GM12878 (cell line): ENCODE measurements at regions of chr2 and their contacts with region 1.

Region 1: DNA sequence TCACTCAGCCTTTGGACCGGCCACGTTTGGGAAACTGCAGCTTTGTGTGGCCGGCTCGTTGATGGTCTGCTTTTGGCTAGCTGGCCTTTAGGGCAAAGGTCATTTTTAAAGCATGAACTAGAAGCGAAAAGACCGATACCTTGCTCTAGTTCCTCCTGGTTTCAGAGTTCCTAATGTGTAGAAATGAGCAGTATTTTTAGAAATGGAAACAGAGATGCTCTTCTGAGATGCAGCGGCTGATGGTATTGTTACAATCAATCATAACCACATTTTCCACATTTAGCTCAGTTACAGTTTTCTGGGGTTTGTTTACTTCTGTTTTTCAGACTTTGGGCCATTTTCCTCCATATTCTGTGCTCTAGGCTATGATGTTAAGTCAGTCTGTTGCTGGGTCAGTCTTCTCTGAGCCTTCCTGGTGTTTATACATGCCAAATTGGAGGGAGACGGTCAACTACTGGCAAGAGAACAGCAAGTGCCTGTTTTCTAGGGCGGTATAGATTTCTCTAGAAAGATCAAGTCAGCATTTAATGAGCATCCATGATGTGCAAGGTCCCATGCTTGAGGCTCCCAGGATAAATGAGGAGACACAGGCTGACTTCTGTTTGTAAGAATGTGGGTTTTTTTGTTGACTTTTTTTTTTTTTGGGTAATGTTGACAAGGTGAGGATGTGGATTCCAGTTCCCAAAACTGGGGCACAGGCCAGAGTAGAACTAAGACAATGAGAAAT is 28.0 kb downstream of the RNF144A start:
- DNase-seq: peak; percentile 72
- ATAC-seq: peak; percentile 94
- H3K4me3 ChIP-seq: no peak overlapping the region
- H3K27ac ChIP-seq: 0 out of 2 replicates have a peak overlapping the region, but pooled peaks have one; percentile 6
- H3K4me1 ChIP-seq: peaks cover 25% of the 10 kb centered on the region
- H3K27me3 ChIP-seq: no peaks in the 10 kb centered on the region
- CTCF ChIP-seq: no peak
- EP300 ChIP-seq: peak; percentile 55; a peak in 2 of 4 replicates
- POLR2A ChIP-seq: no peak
- RAD21 ChIP-seq: no peak

Region 2: GRCh38 chr2:6883448-6884122 is 61.7 kb before region 1 on chr2:
- CTCF ChIA-PET with region 1: no interaction called
- POLR2A ChIA-PET with region 1: no interaction called
- RAD21 ChIA-PET with region 1: no interaction called
- SMC1A ChIA-PET with region 1: no interaction called
- in situ Hi-C with region 1: no loop called
- intact Hi-C with region 1: no loop called
- DNase-seq: no peak
- ATAC-seq: no peak
- H3K4me3 ChIP-seq: no peak overlapping the region
- H3K27ac ChIP-seq: no peak overlapping the region
- H3K4me1 ChIP-seq: no peaks in the 10 kb centered on the region
- H3K27me3 ChIP-seq: peaks cover 0 to 2% of the 10 kb centered on the region in 2 experiments; a peak in 1 of 4 replicates
- CTCF ChIP-seq: no peak
- EP300 ChIP-seq: no peak
- POLR2A ChIP-seq: no peak
- RAD21 ChIP-seq: no peak

Region 3: DNA sequence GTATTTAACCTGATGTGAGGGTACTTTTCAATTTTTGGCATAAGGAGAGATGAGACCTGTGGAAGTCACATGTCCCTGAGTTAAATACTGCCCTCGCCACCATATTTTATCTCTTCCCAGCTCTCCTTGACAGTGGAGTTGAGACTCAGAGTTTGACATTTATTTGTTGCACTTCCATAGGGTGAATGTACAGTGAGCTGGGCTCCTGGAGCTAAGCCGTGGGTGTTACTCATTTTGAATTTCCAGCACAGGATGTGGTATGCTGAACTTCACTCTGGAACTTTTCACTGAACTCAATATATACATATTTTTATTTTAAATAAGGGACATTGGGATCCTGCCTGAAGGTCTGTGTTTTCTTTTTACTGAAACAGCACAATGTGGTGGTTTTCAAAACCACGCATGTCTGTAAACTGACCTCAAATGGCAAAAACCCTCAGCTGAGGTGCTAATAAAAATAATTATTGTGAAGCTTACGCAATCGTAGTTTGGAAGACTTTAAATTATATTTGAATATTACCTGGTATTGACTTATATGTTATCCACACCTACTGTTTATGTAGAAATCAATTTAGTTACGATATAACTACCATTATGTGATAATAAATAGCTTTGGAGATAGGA is 15.9 kb before region 1 on chr2:
- CTCF ChIA-PET with region 1: interaction called, 3 read pairs
- POLR2A ChIA-PET with region 1: interaction called, 4 read pairs
- RAD21 ChIA-PET with region 1: no interaction called
- SMC1A ChIA-PET with region 1: interaction called, 30 read pairs
- in situ Hi-C with region 1: no loop called
- intact Hi-C with region 1: loop called (anchors 1 kb)
- DNase-seq: no peak
- ATAC-seq: no peak
- H3K4me3 ChIP-seq: no peak overlapping the region
- H3K27ac ChIP-seq: no peak overlapping the region
- H3K4me1 ChIP-seq: peaks cover under 1% of the 10 kb centered on the region; the same call in 1 of the 2 replicates
- H3K27me3 ChIP-seq: no peaks in the 10 kb centered on the region
- CTCF ChIP-seq: no peak
- EP300 ChIP-seq: no peak
- POLR2A ChIP-seq: no peak
- RAD21 ChIP-seq: no peak

Region 4: GRCh38 chr2:6934758-6935651 is 10.2 kb before region 1 on chr2:
- CTCF ChIA-PET with region 1: interaction called, 5 read pairs
- POLR2A ChIA-PET with region 1: interaction called, 4 read pairs
- RAD21 ChIA-PET with region 1: no interaction called
- SMC1A ChIA-PET with region 1: interaction called, 30 read pairs
- in situ Hi-C with region 1: no loop called
- intact Hi-C with region 1: loop called (anchors 1 kb)
- DNase-seq: no peak
- ATAC-seq: no peak
- H3K4me3 ChIP-seq: no peak overlapping the region
- H3K27ac ChIP-seq: no peak overlapping the region
- H3K4me1 ChIP-seq: peaks cover 9% of the 10 kb centered on the region; the same call in 1 of the 2 replicates
- H3K27me3 ChIP-seq: no peaks in the 10 kb centered on the region
- CTCF ChIP-seq: no peak
- EP300 ChIP-seq: no peak
- POLR2A ChIP-seq: no peak
- RAD21 ChIP-seq: no peak

Region 5: GRCh38 chr2:6968319-6969100 is 23.3 kb after region 1 on chr2:
- CTCF ChIA-PET with region 1: no interaction called
- POLR2A ChIA-PET with region 1: no interaction called
- RAD21 ChIA-PET with region 1: no interaction called
- SMC1A ChIA-PET with region 1: no interaction called
- in situ Hi-C with region 1: no loop called
- intact Hi-C with region 1: no loop called
- DNase-seq: no peak
- ATAC-seq: 0 out of 3 replicates have a peak, but pooled peaks have one; percentile 17
- H3K4me3 ChIP-seq: no peak overlapping the region
- H3K27ac ChIP-seq: no peak overlapping the region
- H3K4me1 ChIP-seq: no peaks in the 10 kb centered on the region
- H3K27me3 ChIP-seq: no peaks in the 10 kb centered on the region
- CTCF ChIP-seq: no peak
- EP300 ChIP-seq: no peak
- POLR2A ChIP-seq: no peak
- RAD21 ChIP-seq: 0 out of 2 replicates have a peak, but pooled peaks have one; percentile 19

Region 6: GRCh38 chr2:6999211-6999877 is 54.1 kb after region 1 on chr2:
- CTCF ChIA-PET with region 1: interaction called, 3 read pairs
- POLR2A ChIA-PET with region 1: interaction called, 4 read pairs
- RAD21 ChIA-PET with region 1: interaction called, 3 read pairs
- SMC1A ChIA-PET with region 1: interaction called, 20 read pairs
- in situ Hi-C with region 1: no loop called
- intact Hi-C with region 1: no loop called
- DNase-seq: peak; percentile 37
- ATAC-seq: peak; percentile 97
- H3K4me3 ChIP-seq: peak overlapping the region; percentile 7; the same call in 1 of the 2 replicates
- H3K27ac ChIP-seq: peak overlapping the region; percentile 42; the same call in 1 of the 2 replicates
- H3K4me1 ChIP-seq: peaks cover 17% of the 10 kb centered on the region
- H3K27me3 ChIP-seq: no peaks in the 10 kb centered on the region
- CTCF ChIP-seq: no peak
- EP300 ChIP-seq: no peak
- POLR2A ChIP-seq: no peak
- RAD21 ChIP-seq: no peak